Gastrocnemius medialis (tissue), 4 donors: ENCODE measurements at regions of chr6 and their contacts with region 1.

Region 1: GRCh38 chr6:42928986-42929820 is at the start of gene CNPY3:
- DNase-seq: peak; percentile 90 to 92
- ATAC-seq: peak; percentile 96
- H3K4me3 ChIP-seq: peak within 1 kb of the TSS; percentile 74 to 93 (median 82)
- H3K27ac ChIP-seq: peak within 1 kb of the TSS; percentile 79 to 94 (median 88)
- H3K4me1 ChIP-seq: peaks cover 17 to 19% of the 10 kb centered on the region in 2 donors
- H3K27me3 ChIP-seq: no peaks in the 10 kb centered on the region
- CTCF ChIP-seq: peak in 2 of 5 experiments; percentile 17 to 24
- POLR2A ChIP-seq: peak; percentile 41 to 47
- total RNA-seq, gene CNPY3: 7.1 to 13.5 (median 9.3) TPM

Region 2: GRCh38 chr6:42984001-42984923 is 55.1 kb after region 1 on chr6 and contains the start of gene PPP2R5D:
- in situ Hi-C with region 1: no loop called
- intact Hi-C with region 1: loop called (anchors 2 kb)
- DNase-seq: peak; percentile 98 to 99
- ATAC-seq: peak; percentile 98 to 100
- H3K4me3 ChIP-seq: peak within 1 kb of the TSS; percentile 83 to 89 (median 86)
- H3K27ac ChIP-seq: peak within 1 kb of the TSS; percentile 85 to 95 (median 90)
- H3K4me1 ChIP-seq: peaks cover 39 to 49% of the 10 kb centered on the region in 2 donors
- H3K27me3 ChIP-seq: no peaks in the 10 kb centered on the region
- CTCF ChIP-seq: peak in 1 of 5 experiments; percentile 8
- POLR2A ChIP-seq: peak; percentile 72 to 80
- total RNA-seq, gene PPP2R5D: 44.3 to 68.2 (median 52.6) TPM